Left colon (tissue), 2 donors: ENCODE measurements at regions of chr15 and their contacts with region 1.

Region 1: DNA sequence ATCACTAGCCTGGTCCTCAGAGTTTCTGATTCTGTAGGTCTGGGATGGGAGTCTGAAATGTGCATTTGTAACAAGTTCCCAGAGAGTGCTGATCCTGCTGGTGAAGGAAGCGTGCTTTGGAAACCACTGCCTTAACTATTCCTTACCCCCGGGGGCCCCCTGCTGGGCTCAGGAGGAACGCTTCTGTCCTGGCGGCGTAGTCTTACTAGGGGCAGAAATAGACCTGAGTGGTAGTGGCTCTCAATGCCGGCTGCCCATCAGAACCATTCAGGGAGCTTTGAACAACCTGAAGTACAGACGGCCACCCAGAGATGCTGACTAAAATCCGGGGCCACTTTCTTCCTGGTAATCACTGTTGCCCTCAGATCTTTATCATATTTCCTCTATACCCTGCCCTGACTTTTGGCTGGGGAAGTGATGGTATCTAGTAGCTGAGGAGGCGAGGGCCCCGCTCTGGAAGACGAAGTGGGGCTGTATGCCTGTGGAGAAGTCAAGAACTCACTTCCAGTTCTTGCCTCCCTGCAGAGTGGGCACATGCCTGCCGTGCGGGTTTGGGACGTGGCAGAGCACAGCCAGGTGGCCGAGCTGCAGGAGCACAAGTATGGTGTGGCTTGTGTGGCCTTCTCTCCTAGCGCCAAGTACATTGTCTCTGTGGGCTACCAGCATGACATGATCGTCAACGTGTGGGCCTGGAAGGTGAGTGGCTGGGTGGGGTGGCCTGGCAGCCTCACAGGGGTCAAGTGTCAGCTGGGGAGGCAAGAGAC is 16.3 kb upstream of the JMJD7 start:
- DNase-seq: peak; percentile 66 to 88
- ATAC-seq: peak; percentile 98

Region 2: DNA sequence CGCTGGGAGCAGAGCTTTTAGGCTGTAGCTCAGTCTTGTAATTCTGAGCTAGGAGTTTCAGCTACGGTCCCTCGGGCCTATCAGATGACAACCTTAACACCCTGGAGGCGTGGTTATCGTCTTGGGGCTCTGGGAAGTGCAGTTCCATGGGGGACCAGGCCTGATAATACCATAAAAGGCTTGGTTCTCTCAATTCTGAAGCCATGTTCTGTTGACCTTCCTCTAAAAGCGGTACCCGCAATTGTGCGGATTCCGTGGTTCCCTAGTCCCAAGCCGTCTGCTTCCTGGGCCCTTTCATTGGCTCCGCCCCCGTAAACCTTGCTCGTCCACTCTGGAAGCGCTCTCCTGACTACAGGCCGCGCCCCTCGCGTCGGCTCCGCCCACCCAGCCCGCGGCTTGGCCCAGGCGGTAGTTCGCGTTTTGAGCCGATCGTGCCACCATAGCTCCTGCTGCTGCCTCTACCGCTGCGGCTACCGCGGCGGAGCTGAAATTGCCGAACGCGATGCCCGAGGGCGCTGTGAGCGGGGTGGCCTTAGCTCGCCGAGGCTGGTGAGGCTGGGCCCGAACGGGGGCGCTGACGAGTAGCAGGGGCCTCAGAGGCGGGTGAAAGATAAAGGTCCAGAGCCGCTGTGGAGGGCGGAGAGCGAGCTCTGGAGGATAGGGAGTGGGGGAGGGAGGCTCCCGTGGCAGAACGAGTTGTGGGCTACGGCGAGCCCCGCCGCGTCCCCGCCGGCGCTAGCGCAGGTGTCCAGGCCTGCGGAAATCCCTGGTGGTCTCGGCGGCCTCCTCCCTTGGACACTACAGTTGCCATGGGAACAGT is 37.3 kb before region 1 on chr15 and contains the start of gene MAPKBP1:
- intact Hi-C with region 1: loop called in 1 of 2 experiments (anchors 5 kb)
- DNase-seq: peak; percentile 98 to 99
- ATAC-seq: peak; percentile 94
- total RNA-seq, gene MAPKBP1: 12.2 to 15.2 TPM